ENCODE measurements at regions of chr14 and their contacts with region 1.

Region 1: GRCh38 chr14:73717711-73718417 is 3.7 kb upstream of the PNMA1 start:
- DNase-seq: no peak
- H3K4me3 ChIP-seq: no peak overlapping the region
- H3K27ac ChIP-seq: no peak overlapping the region
- H3K4me1 ChIP-seq: peaks cover 2 to 14% (median 11%) of the 10 kb centered on the region in 4 experiments
- H3K27me3 ChIP-seq: no peaks in the 10 kb centered on the region

Region 2: GRCh38 chr14:73627151-73627558 is 90.7 kb before region 1 on chr14:
- CTCF ChIA-PET with region 1: no interaction called
- POLR2A ChIA-PET with region 1: no interaction called
- DNase-seq: no peak
- H3K4me3 ChIP-seq: no peak overlapping the region
- H3K27ac ChIP-seq: no peak overlapping the region
- H3K4me1 ChIP-seq: no peaks in the 10 kb centered on the region
- H3K27me3 ChIP-seq: no peaks in the 10 kb centered on the region

Region 3: DNA sequence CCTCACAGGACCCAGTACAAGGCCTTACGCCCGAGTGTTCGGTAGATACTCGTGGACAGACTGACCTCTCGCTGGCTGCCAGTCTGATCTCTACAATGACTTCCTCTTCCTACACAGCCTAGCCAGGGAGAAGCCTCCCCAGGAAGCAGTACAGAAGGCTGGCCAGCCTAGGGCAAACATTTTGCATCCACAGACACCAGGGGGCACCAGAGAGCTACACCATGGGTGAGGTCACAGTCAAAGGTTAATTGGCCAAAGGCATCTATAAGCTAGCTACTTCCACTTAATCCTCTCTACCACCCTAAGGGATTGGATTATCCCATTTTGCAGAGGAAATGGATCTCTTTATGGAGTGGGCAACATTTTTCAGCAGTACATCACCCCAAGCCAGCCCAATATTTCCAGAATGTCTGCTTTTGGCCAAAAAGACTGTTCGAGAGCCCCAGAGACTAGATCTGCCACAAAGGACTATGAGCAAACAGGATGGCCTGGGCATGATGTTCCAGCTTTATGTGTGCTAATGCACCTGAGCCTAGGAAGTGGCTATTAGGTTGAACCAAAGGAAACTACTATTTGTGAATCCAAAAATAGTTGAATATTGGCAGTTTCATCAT is 11.0 kb after region 1 on chr14:
- CTCF ChIA-PET with region 1: interaction called, 15 read pairs
- POLR2A ChIA-PET with region 1: interaction called, 3 read pairs
- DNase-seq: peak; percentile 77 to 87 (median 78)
- H3K4me3 ChIP-seq: no peak overlapping the region
- H3K27ac ChIP-seq: peak overlapping the region in 1 of 2 experiments; percentile 52
- H3K4me1 ChIP-seq: peaks cover 0 to 33% (median 29%) of the 10 kb centered on the region in 4 experiments
- H3K27me3 ChIP-seq: no peaks in the 10 kb centered on the region

Region 4: GRCh38 chr14:73792332-73792880 is 74.5 kb after region 1 on chr14:
- CTCF ChIA-PET with region 1: no interaction called
- POLR2A ChIA-PET with region 1: no interaction called
- DNase-seq: no peak
- H3K4me3 ChIP-seq: no peak overlapping the region
- H3K27ac ChIP-seq: no peak overlapping the region
- H3K4me1 ChIP-seq: peaks cover 9 to 32% (median 17%) of the 10 kb centered on the region in 4 experiments
- H3K27me3 ChIP-seq: no peaks in the 10 kb centered on the region

Measured in common myeloid progenitor, CD34-positive (primary cell).